ENCODE measurements at regions of chr15 and their contacts with region 1.

Region 1: DNA sequence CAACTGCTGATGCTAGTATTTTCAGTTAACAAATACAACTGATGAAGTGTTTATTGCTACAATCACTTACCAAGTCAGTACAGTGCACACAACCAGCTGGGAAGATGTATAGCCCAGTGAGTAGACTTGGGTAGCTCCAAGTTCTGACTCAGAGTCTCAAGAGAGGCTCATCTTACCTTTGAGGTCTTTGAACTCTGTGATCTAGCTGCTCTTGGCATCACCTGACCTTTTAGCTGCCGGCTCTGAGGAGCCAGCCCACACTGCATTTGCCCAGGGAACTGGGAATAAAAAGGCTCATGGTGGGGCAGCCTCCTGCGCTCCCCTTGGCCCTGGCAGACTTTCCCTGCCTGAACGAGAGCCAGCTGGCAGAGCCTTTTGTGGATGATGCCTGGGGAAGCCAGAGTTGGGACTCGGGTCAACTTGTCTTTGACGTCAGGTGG is 82.6 kb downstream of the CEMIP start:
- DNase-seq: no peak
- H3K4me3 ChIP-seq: no peak overlapping the region
- CTCF ChIP-seq: no peak

Region 2: GRCh38 chr15:80789296-80789695 is 72.5 kb before region 1 on chr15:
- in situ Hi-C with region 1: loop called (anchors 5 kb)
- DNase-seq: no peak
- H3K4me3 ChIP-seq: no peak overlapping the region
- CTCF ChIP-seq: no peak

Region 3: DNA sequence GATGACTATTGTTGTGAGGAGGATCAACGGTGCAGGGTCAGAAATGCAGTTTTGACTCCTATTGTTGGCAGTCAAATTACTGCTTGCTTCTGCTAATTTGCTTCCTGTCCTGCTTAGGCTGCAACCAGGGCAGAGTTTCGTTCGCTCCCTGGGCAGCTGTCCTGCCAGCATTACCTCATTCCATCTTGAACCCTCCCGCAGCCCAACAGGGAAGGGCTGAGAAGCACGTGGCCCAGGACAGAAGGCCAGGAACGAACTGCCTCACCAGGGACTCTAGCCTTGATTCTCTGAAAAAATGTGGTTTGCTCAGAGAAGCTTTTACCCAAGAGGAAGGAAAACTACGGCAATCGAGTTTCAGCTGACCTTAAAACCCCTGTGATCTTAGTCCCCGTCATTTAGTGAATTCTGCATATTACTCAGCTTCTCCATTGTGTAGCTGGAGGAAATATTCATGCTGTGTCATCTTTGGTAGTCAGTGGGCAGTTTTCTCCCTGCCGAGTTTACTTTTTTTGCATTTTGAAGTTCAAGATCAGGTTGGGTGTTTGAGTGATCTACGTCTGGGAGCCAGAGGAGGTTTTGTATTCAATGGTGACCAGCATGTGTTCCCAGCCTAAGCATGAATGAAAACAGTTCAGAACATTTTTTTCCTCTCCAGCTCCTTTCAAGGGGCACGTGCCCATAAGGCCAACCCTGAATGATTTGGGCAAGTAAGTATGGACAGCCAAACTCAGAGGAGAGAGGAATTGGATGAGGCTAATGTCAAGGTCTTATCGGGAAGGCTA is 161.9 kb after region 1 on chr15:
- in situ Hi-C with region 1: no loop called
- DNase-seq: no peak
- H3K4me3 ChIP-seq: no peak overlapping the region
- CTCF ChIP-seq: no peak